Mammary epithelial cell (primary cell): ENCODE measurements at regions of chr2 and their contacts with region 1.

Region 1: DNA sequence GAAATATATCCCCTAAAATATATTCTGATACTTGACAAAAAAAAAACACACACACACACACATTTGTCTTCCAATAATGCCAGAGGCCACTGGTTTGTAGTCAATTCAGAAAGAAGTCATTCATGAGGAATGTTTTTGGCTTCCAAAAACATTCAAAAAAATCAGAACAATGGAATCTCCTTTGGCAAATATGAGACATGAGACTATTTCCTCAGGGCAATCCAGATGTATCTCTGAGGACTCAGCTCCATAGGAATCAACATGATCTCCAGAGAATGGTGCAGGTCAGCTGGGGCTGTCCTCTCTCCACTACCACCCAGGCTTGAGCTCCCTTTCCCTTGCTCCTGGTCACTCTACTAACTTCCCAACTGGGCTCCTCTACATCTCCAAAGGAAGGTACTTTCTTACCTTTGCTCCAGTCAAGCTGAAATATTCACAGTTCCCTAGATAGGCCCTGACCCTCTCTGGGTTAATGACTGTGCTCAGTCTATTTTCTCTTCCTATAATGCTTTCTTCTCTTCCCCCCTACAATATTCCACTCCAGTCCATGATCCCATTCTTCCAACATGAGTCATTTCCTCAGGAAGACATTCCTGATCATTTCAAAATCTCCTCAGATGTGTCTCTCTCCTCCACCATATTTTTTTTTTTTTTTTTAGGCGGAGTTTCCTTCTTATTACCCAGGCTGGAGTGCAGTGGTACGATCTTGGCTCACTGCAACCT is 145.3 kb downstream of the C1D start:
- DNase-seq: peak; percentile 86
- H3K4me3 ChIP-seq: no peak overlapping the region
- H3K27ac ChIP-seq: peak overlapping the region; percentile 86
- H3K4me1 ChIP-seq: peaks cover 19% of the 10 kb centered on the region
- H3K27me3 ChIP-seq: no peaks in the 10 kb centered on the region
- CTCF ChIP-seq: no peak

Region 2: DNA sequence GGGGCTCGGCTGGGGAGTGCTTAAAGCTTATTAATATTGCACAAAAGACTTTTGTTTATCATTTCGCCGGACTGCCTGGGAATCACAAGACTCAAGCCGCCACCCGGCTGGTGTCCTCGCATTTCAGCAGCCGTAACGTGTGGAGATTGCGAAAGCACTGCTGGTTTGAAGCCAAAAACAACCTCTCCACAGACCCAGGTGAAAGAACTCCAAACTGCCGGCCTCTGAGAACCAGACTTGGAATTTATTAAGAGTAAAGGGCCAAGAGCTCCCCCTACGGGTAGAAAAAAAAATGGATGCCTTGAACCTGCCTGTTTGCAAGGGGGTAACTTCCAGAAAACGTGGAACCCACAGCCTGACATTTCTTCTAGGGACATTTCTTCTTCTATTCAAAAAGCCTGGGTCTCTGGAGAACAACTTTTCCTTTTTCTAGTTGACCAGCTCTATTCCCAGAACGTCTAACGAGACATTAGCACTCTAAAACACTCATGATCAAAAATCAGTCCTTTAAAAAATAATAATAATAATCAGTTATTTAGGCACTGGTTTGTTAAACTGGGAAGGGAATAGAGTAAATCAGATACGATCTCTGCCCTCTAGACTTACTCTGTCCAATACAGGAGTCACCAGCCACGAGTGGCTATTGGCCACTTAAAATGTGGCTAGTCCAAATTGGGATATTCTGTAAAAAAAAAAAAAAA is 71.0 kb before region 1 on chr2:
- CTCF ChIA-PET with region 1: no interaction called
- dilution Hi-C with region 1: no loop called
- in situ Hi-C with region 1: no loop called
- intact Hi-C with region 1: loop called (anchors 5 kb)
- DNase-seq: peak; percentile 91
- H3K4me3 ChIP-seq: no peak overlapping the region
- H3K27ac ChIP-seq: peak overlapping the region; percentile 15
- H3K4me1 ChIP-seq: peaks cover 5% of the 10 kb centered on the region
- H3K27me3 ChIP-seq: no peaks in the 10 kb centered on the region
- CTCF ChIP-seq: peak; percentile 53 to 77

Region 3: GRCh38 chr2:67965246-67965645 is 47.8 kb after region 1 on chr2:
- CTCF ChIA-PET with region 1: no interaction called
- dilution Hi-C with region 1: no loop called
- in situ Hi-C with region 1: no loop called
- intact Hi-C with region 1: loop called (anchors 5 kb)
- DNase-seq: peak; percentile 83
- H3K4me3 ChIP-seq: no peak overlapping the region
- H3K27ac ChIP-seq: peak overlapping the region; percentile 27
- H3K4me1 ChIP-seq: peaks cover 17% of the 10 kb centered on the region
- H3K27me3 ChIP-seq: no peaks in the 10 kb centered on the region
- CTCF ChIP-seq: no peak

Region 4: DNA sequence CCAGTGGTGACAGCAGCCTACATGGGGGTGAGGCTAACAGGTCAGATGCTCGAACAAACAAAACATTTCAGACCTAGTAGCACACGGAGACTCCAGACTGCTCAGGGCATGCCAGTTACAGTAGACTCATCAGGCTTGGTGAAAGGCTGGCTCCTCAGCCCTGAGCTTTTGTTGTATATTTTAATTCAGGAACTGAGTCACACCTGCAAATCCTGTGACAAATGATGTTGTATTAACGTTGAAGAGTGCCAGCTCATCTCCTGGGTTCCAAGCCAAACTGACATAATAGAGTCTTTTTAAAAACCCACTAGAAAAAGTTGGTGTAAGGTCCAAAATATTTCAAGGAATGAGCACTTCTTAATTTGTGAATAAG is 80.0 kb after region 1 on chr2:
- CTCF ChIA-PET with region 1: no interaction called
- dilution Hi-C with region 1: no loop called
- in situ Hi-C with region 1: no loop called
- intact Hi-C with region 1: loop called (anchors 1 kb)
- DNase-seq: peak; percentile 90
- H3K4me3 ChIP-seq: peak overlapping the region in 2 of 3 experiments; percentile 0 to 1
- H3K27ac ChIP-seq: peak overlapping the region; percentile 70
- H3K4me1 ChIP-seq: peaks cover 30% of the 10 kb centered on the region
- H3K27me3 ChIP-seq: no peaks in the 10 kb centered on the region
- CTCF ChIP-seq: no peak